ENCODE measurements at regions of chr1 and their contacts with region 1.

Region 1: GRCh38 chr1:13960375-13960987 is 260.5 kb downstream of the PRDM2 start:
- DNase-seq: peak in 1 of 2 experiments; percentile 41
- H3K4me3 ChIP-seq: no peak overlapping the region
- H3K27ac ChIP-seq: no peak overlapping the region
- H3K4me1 ChIP-seq: no peaks in the 10 kb centered on the region
- H3K27me3 ChIP-seq: no peaks in the 10 kb centered on the region
- CTCF ChIP-seq: peak; percentile 86

Region 2: DNA sequence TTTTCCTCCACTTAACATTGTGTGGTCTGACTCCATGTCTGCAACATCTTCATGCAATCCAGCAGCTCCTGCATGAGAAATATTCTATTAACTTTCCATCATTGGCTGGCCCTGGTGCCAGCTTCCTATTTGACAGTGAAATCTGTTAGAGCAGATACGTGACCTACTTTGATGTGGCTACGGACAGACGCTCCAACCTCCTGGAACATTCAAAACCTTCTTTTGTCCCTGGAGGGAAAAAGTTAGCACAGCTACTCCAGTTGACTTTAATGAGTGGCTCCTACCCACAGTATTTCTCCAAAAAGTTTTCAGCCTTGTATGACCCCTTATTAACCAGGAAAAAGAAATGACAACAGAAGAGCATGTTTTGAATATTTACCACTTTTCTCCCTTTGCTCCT is 528.2 kb before region 1 on chr1:
- CTCF ChIA-PET with region 1: no interaction called
- POLR2A ChIA-PET with region 1: no interaction called
- intact Hi-C with region 1: loop called (anchors 10 kb)
- DNase-seq: no peak
- H3K4me3 ChIP-seq: no peak overlapping the region
- H3K27ac ChIP-seq: no peak overlapping the region
- H3K4me1 ChIP-seq: no peaks in the 10 kb centered on the region
- H3K27me3 ChIP-seq: peaks cover 18% of the 10 kb centered on the region
- CTCF ChIP-seq: no peak

Region 3: GRCh38 chr1:13662493-13662892 is 298.0 kb before region 1 on chr1:
- CTCF ChIA-PET with region 1: no interaction called
- POLR2A ChIA-PET with region 1: no interaction called
- intact Hi-C with region 1: loop called (anchors 1 kb)
- DNase-seq: no peak
- H3K4me3 ChIP-seq: no peak overlapping the region
- H3K27ac ChIP-seq: no peak overlapping the region
- H3K4me1 ChIP-seq: no peaks in the 10 kb centered on the region
- H3K27me3 ChIP-seq: peaks cover 13% of the 10 kb centered on the region
- CTCF ChIP-seq: no peak

Region 4: DNA sequence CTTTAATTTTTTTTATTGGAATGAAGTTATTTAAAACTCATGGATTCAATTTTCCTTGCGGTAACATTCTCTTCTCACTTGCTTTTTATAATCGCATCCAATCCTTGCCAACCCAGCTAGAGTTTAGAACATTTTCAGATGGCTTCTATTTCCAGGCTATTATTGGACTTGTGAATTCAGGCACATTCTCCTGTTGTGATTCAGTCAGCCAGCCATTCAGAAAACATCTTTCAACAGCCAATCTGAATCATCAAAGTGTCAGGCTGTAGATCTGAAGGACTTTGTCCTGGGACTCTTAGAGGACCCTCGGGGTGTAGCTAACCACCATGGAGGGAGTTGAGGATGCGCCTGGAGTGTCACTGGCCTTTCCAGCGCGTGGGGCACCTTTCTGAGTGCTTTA is 168.1 kb before region 1 on chr1:
- CTCF ChIA-PET with region 1: no interaction called
- POLR2A ChIA-PET with region 1: no interaction called
- intact Hi-C with region 1: no loop called
- DNase-seq: no peak
- H3K4me3 ChIP-seq: no peak overlapping the region
- H3K27ac ChIP-seq: no peak overlapping the region
- H3K4me1 ChIP-seq: no peaks in the 10 kb centered on the region
- H3K27me3 ChIP-seq: no peaks in the 10 kb centered on the region
- CTCF ChIP-seq: no peak

Region 5: GRCh38 chr1:14437417-14437918 is 477.0 kb after region 1 on chr1:
- CTCF ChIA-PET with region 1: interaction called, 11 read pairs
- POLR2A ChIA-PET with region 1: no interaction called
- intact Hi-C with region 1: no loop called
- DNase-seq: no peak
- H3K4me3 ChIP-seq: no peak overlapping the region
- H3K27ac ChIP-seq: no peak overlapping the region
- H3K4me1 ChIP-seq: no peaks in the 10 kb centered on the region
- H3K27me3 ChIP-seq: peaks cover 6% of the 10 kb centered on the region; the same call in 1 of the 2 replicates
- CTCF ChIP-seq: no peak